Activated CD4-positive, alpha-beta T cell treated with anti-CD3 and anti-CD28 coated beads for 36 hours (primary cell): ENCODE measurements at regions of chr9 and their contacts with region 1.

Region 1: DNA sequence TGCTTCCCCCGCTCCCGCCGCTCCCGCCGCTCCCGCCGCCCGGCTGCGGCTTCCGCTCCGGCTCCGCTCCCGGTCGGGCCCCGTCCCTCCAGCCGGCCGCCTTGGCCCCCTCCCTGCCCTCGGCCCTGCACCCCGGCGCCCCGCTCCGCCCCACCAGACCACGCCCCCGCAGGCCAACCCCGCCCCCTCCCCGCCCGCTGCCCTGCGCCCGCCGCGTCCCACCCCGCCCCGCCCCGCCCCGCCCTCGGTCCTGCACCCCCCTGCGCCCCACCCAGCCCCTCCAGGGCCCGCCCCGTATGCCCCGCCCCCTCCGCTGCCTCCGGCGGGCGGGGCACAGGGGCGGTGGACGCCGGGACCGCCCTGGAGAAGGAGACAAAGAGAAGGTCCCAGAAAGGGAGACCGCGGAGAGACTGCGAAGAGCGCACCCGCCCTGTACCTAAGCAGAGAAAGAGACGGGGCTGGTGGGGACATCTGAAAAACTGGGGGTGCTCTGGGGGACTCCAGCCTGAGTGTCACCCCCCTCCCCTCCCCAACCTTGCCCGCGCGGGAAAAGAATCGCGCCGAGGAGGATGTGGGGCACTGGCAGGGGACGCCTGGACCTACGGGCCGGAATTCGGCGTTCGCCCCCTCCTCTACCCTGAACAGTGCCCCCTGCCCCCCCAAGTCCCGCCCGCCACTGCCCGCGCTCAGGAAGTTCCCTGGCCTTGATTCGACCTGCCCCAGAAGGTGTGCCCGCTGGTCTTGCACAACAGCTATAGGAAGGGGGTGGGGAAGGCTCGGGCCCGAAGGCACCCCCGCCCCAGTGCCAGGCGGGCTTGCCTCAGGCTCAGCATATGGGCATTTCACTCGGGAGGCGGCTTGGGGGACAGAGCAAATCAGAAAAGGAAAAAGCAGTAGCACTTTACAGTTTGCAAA is 42.8 kb upstream of the STXBP1 start:
- DNase-seq: peak; percentile 88
- ATAC-seq: peak; percentile 85
- H3K4me3 Mint-ChIP-seq: peak overlapping the region; percentile 71
- H3K27ac Mint-ChIP-seq: peak overlapping the region; percentile 38
- H3K4me1 Mint-ChIP-seq: peaks cover 26% of the 10 kb centered on the region
- H3K27me3 Mint-ChIP-seq: no peaks in the 10 kb centered on the region

Region 2: GRCh38 chr9:127244609-127245601 is 324.3 kb before region 1 on chr9:
- CTCF ChIA-PET with region 1: no interaction called
- POLR2A ChIA-PET with region 1: no interaction called
- intact Hi-C with region 1: loop called in 1 of 2 experiments (anchors 1 kb)
- DNase-seq: peak; percentile 98
- ATAC-seq: peak; percentile 100
- H3K4me3 Mint-ChIP-seq: peak overlapping the region; percentile 78
- H3K27ac Mint-ChIP-seq: peak overlapping the region; percentile 59
- H3K4me1 Mint-ChIP-seq: peaks cover 6% of the 10 kb centered on the region
- H3K27me3 Mint-ChIP-seq: peaks cover 5% of the 10 kb centered on the region